A673 (cell line): ENCODE measurements at regions of chr19 and their contacts with region 1.

Region 1: GRCh38 chr19:19192078-19192882 is at the starts of genes BORCS8 and RFXANK:
- DNase-seq: peak; percentile 100
- H3K4me3 ChIP-seq: peak within 1 kb of the TSS; percentile 98
- H3K27ac ChIP-seq: peak within 1 kb of the TSS; percentile 100
- H3K4me1 ChIP-seq: peaks cover 13% of the 10 kb centered on the region
- H3K27me3 ChIP-seq: no peaks in the 10 kb centered on the region
- CTCF ChIP-seq: no peak
- total RNA-seq, gene BORCS8: 29.9 and 37.5 TPM in 2 replicates
- total RNA-seq, gene RFXANK: 96.3 and 109 TPM in 2 replicates

Region 2: GRCh38 chr19:19203012-19203856 is 11.0 kb after region 1 on chr19 and contains the start of gene NR2C2AP:
- CTCF ChIA-PET with region 1: interaction called, 13 read pairs
- POLR2A ChIA-PET with region 1: no interaction called
- intact Hi-C with region 1: no loop called
- DNase-seq: peak; percentile 96
- H3K4me3 ChIP-seq: peak within 1 kb of the TSS; percentile 68
- H3K27ac ChIP-seq: peak within 1 kb of the TSS; percentile 89
- H3K4me1 ChIP-seq: peaks cover 10% of the 10 kb centered on the region
- H3K27me3 ChIP-seq: no peaks in the 10 kb centered on the region
- CTCF ChIP-seq: no peak
- total RNA-seq, gene NR2C2AP: 35.6 and 45.3 TPM in 2 replicates

Region 3: DNA sequence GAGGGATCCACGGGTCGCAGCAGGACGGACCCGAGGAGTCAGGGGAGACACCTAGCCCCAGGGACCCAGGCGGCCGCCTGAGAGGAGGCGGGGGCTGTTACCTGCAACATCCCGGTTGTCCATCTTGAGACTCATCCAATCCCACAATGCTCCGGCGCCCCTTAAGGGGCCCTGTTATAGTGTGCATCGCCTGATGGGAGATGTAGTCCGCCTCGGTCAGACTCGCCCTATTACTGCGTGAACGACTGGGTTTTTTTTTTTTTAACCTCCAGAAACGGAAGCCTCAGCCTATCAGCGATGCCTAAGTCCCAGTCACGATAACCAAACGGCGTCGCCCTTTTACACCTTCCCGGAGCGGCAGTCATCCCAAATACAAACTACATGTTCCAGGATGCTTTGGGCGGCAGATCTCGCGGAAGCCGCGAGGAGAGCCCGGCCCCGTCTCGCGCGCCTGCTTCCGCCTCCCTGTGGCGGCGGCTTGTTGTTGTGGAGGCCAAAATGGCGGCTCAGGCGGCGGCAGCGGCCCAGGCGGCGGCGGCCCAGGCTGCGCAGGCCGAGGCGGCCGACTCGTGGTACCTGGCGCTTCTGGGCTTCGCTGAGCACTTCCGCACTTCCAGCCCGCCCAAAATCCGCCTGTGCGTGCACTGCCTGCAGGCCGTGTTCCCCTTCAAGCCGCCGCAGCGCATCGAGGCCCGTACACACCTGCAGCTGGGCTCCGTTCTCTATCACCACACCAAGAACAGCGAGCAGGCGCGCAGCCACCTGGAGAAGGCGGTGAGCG is 128.3 kb after region 1 on chr19 and contains the starts of genes MAU2 and SUGP1:
- CTCF ChIA-PET with region 1: no interaction called
- POLR2A ChIA-PET with region 1: no interaction called
- intact Hi-C with region 1: loop called (anchors 1 kb)
- DNase-seq: peak; percentile 95
- H3K4me3 ChIP-seq: peak within 1 kb of the TSS; percentile 85
- H3K27ac ChIP-seq: peak within 1 kb of the TSS; percentile 95
- H3K4me1 ChIP-seq: peaks cover 7% of the 10 kb centered on the region
- H3K27me3 ChIP-seq: no peaks in the 10 kb centered on the region
- CTCF ChIP-seq: 0 out of 2 replicates have a peak, but pooled peaks have one; percentile 20
- total RNA-seq, gene MAU2: 66.7 and 72.6 TPM in 2 replicates
- total RNA-seq, gene SUGP1: 73.8 and 86.1 TPM in 2 replicates